CD8-positive, alpha-beta T cell (primary cell): ENCODE measurements at regions of chr5 and their contacts with region 1.

Region 1: GRCh38 chr5:87008751-87009560 is 258.7 kb upstream of the RASA1 start:
- DNase-seq: no peak
- ATAC-seq: no peak
- H3K4me3 ChIP-seq: no peak overlapping the region
- H3K4me3 Mint-ChIP-seq: no peak overlapping the region
- H3K27ac ChIP-seq: no peak overlapping the region
- H3K27ac Mint-ChIP-seq: no peak overlapping the region
- H3K4me1 ChIP-seq: no peaks in the 10 kb centered on the region
- H3K4me1 Mint-ChIP-seq: no peaks in the 10 kb centered on the region
- H3K27me3 ChIP-seq: no peaks in the 10 kb centered on the region
- H3K27me3 Mint-ChIP-seq: no peaks in the 10 kb centered on the region
- CTCF ChIP-seq: no peak

Region 2: GRCh38 chr5:86880785-86881492 is 128.0 kb before region 1 on chr5:
- CTCF ChIA-PET with region 1: interaction called, 3 read pairs
- POLR2A ChIA-PET with region 1: no interaction called
- intact Hi-C with region 1: loop called in 1 of 2 experiments (anchors 2 kb)
- DNase-seq: peak in 7 of 9 experiments; percentile 1 to 60 (median 16)
- ATAC-seq: peak; percentile 66
- H3K4me3 ChIP-seq: no peak overlapping the region
- H3K4me3 Mint-ChIP-seq: no peak overlapping the region
- H3K27ac ChIP-seq: no peak overlapping the region
- H3K27ac Mint-ChIP-seq: no peak overlapping the region
- H3K4me1 ChIP-seq: no peaks in the 10 kb centered on the region
- H3K4me1 Mint-ChIP-seq: no peaks in the 10 kb centered on the region
- H3K27me3 ChIP-seq: no peaks in the 10 kb centered on the region
- H3K27me3 Mint-ChIP-seq: peaks cover 2% of the 10 kb centered on the region
- CTCF ChIP-seq: no peak

Region 3: GRCh38 chr5:86951761-86952160 is 57.2 kb before region 1 on chr5:
- CTCF ChIA-PET with region 1: no interaction called
- POLR2A ChIA-PET with region 1: no interaction called
- intact Hi-C with region 1: no loop called
- DNase-seq: no peak
- ATAC-seq: no peak
- H3K4me3 ChIP-seq: no peak overlapping the region
- H3K4me3 Mint-ChIP-seq: no peak overlapping the region
- H3K27ac ChIP-seq: no peak overlapping the region
- H3K27ac Mint-ChIP-seq: no peak overlapping the region
- H3K4me1 ChIP-seq: no peaks in the 10 kb centered on the region
- H3K4me1 Mint-ChIP-seq: no peaks in the 10 kb centered on the region
- H3K27me3 ChIP-seq: no peaks in the 10 kb centered on the region
- H3K27me3 Mint-ChIP-seq: peaks cover 15% of the 10 kb centered on the region
- CTCF ChIP-seq: no peak